ENCODE measurements at regions of chr5 and their contacts with region 1.

Region 1: DNA sequence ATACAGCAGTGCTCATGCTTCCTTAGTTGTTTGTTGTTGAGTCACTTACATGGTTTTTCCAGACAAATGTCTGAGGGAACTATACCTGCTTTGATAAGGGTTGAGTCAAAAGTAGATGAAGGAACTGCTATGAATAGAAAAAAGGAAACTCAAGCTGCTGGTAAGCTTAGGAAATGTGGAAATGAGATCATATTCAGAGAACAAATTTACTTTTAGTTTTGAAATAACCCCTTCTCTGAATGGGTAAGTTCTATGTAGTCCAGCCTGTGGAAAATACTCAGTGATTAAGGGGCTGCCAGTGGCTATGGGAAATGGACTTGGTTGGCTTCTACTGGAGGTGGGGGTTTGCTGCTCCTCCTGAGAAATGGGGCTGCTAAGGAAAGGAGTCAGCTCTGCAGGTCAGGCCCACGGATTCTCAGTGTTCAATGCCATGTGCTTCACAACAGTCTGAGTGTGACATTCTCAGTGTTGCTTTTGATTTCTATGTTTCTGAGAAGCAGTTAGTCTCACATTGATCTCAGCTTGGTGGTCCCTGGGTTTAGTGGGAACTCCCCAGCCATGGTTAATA is 47.7 kb upstream of the GLRX start:
- DNase-seq: no peak
- H3K4me3 ChIP-seq: no peak overlapping the region
- H3K27ac ChIP-seq: peak overlapping the region in 4 of 5 donors; percentile 23 to 78 (median 70)
- H3K4me1 ChIP-seq: peaks cover 0 to 31% (median 14%) of the 10 kb centered on the region in 4 donors
- H3K27me3 ChIP-seq: no peaks in the 10 kb centered on the region
- CTCF ChIP-seq: no peak
- EP300 ChIP-seq: no peak
- POLR2A ChIP-seq: no peak

Region 2: DNA sequence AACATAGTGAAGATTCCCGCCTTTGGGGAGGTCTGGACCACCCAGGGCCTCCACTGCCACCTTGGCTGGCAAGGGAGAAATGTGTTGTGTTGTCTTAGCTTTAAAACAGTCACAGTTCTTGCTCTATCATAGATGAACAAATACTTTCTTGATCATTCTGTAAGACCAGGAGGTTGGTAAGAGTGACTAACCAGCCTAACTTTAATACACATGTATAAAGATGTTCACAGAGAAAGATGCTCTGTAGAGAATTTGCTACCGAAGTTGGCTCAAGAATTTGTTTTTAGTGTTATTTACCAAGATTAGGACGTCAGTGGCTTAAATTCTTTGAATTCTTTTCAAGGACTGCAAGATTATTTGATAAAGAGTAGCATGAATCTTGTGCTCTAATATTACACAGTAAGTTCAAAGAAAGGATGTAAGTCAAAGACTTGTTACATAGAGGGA is 76.1 kb before region 1 on chr5:
- intact Hi-C with region 1: no loop called
- DNase-seq: no peak
- H3K4me3 ChIP-seq: no peak overlapping the region
- H3K27ac ChIP-seq: no peak overlapping the region
- H3K4me1 ChIP-seq: no peaks in the 10 kb centered on the region
- H3K27me3 ChIP-seq: no peaks in the 10 kb centered on the region
- CTCF ChIP-seq: no peak
- EP300 ChIP-seq: no peak
- POLR2A ChIP-seq: no peak

Region 3: DNA sequence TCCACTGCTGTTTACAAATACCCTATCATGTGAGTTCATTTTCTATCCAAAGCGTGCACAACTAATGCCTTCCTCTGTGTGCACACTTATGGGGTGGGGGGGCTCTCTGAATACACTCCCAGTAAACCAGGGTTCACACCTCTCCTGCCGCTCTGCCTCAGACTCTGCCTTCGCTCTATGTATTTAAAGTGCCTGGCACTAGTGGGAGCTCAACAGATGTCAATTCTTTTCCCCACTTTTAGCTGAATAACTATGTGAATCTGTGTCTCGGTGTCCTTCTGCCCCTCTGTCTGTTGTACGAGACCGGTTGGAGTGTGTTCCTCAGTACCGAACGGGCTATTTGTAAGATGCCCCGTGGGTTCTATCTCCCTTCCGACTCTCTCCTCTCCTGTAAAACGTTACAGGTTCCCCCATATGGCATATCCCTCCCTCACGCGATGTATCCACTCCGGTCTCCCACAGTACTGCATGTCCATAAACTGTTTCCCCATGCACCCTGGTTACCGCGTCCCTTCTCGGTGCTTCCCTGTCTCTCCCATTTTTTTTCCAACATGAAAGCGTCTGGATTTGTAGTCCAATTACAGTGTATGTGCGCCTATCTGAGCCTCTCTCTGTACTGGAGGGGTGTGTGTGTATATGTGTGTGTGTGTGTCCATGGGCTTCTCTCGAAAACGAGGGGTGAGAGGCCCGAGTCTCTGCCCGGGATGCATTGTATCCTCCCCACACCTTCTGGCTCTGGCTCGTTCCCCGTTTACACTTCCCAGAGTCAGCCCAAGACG is 89.9 kb after region 1 on chr5:
- intact Hi-C with region 1: loop called (anchors 10 kb)
- DNase-seq: peak in 1 of 2 donors; percentile 74
- H3K4me3 ChIP-seq: peak overlapping the region; percentile 78 to 91 (median 86)
- H3K27ac ChIP-seq: peak overlapping the region; percentile 99 to 100 (median 99)
- H3K4me1 ChIP-seq: peaks cover 21 to 60% (median 46%) of the 10 kb centered on the region in 4 donors
- H3K27me3 ChIP-seq: no peaks in the 10 kb centered on the region
- CTCF ChIP-seq: peak in 2 of 7 experiments; percentile 6 to 21
- EP300 ChIP-seq: no peak
- POLR2A ChIP-seq: no peak

Region 4: GRCh38 chr5:96049398-96050272 is 179.4 kb after region 1 on chr5:
- intact Hi-C with region 1: no loop called
- DNase-seq: no peak
- H3K4me3 ChIP-seq: no peak overlapping the region
- H3K27ac ChIP-seq: no peak overlapping the region
- H3K4me1 ChIP-seq: peaks cover 0 to 23% (median 5%) of the 10 kb centered on the region in 4 donors
- H3K27me3 ChIP-seq: no peaks in the 10 kb centered on the region
- CTCF ChIP-seq: no peak
- EP300 ChIP-seq: no peak
- POLR2A ChIP-seq: no peak